Naive thymus-derived CD4-positive, alpha-beta T cell (primary cell): ENCODE measurements at regions of chr17 and their contacts with region 1.

Region 1: DNA sequence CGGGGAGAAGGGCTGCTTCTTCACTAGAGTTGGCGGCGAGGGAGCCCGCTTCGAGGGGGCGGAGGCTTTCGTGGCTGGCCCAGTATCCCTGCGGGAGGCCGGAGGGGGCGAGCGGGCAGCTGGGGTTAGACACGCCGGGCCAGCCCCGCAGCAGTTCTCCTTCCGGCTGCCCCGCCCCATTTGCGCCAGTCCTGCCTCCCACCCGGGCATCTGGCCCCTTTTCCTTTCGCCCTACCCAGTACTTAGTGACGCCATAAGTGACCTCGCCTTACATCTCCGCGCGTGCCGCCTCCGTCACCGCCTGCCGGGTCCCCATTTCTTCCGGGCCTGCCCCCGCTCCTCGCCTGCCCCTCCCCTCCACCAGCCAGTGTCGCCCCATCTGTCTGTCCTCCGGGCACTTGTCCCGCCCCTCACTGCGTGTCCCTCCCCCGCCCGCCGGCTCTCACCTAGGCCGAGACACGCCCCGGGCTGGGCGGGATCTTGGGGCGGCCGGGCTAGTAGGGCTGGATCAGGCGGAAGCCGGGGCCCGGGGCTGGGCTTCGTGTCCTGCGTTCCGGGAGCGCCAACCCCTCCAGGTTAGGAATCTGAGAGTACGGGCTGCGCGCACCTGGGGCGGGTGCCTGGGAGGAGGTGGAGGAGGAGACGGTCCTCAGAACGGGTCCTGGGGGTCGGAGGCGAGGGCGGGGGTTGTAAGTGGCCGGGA is 14.3 kb downstream of the SPATA32 start:
- DNase-seq: peak; percentile 83 to 96 (median 87)
- ATAC-seq: peak; percentile 88
- H3K4me3 ChIP-seq: peak overlapping the region; percentile 89
- H3K4me3 Mint-ChIP-seq: peak overlapping the region; percentile 88 to 93 (median 90)
- H3K27ac ChIP-seq: peak overlapping the region; percentile 95
- H3K27ac Mint-ChIP-seq: peak overlapping the region; percentile 89 to 98 (median 96)
- H3K4me1 ChIP-seq: peaks cover 26 to 42% of the 10 kb centered on the region in 2 donors
- H3K4me1 Mint-ChIP-seq: peaks cover 30 to 68% (median 61%) of the 10 kb centered on the region in 7 donors
- H3K27me3 ChIP-seq: no peaks in the 10 kb centered on the region
- H3K27me3 Mint-ChIP-seq: no peaks in the 10 kb centered on the region

Region 2: DNA sequence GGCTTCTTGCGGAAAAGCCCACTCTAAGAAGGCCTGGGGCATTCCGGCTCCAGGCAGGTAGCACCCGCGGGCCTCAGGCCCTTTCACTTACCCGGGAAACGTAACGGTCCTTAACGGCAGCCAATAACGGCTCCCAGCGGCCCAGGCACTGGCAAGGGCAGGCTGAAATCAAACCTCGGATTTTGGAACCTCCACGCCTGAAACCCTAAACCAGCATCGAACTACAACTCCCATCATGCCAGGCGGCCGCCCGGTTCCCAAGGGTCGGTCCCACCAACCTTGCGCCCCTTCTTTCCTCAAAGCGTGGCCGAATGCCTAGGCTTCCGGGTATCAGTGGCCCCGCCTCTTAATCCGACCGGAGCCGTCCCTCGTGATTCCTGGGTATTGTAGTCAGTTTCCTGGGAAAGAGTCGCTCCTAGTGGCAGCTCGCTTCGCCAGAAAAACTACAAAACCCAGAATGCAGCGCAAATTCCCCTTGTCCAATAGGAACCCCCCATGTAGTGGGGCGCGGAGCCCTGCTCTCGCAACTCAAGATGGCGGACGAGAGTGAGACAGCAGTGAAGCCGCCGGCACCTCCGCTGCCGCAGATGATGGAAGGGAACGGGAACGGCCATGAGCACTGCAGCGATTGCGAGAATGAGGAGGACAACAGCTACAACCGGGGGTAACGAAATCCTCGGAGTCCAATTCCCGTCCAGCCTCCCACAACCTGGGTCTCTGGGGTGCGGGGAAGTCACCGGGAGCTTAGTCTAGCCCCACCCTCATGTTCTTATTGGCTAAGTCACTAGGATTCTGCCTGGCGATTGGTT is 186.6 kb before region 1 on chr17 and contains the start of gene NMT1:
- CTCF ChIA-PET with region 1: no interaction called
- POLR2A ChIA-PET with region 1: no interaction called
- intact Hi-C with region 1: loop called in 1 of 2 experiments (anchors 1 kb)
- DNase-seq: peak; percentile 81 to 98 (median 98)
- ATAC-seq: peak; percentile 95
- H3K4me3 ChIP-seq: peak within 1 kb of the TSS; percentile 97
- H3K4me3 Mint-ChIP-seq: peak within 1 kb of the TSS; percentile 80 to 100 (median 98)
- H3K27ac ChIP-seq: peak within 1 kb of the TSS; percentile 87
- H3K27ac Mint-ChIP-seq: peak within 1 kb of the TSS; percentile 88 to 99 (median 97)
- H3K4me1 ChIP-seq: peaks cover 18 to 20% of the 10 kb centered on the region in 2 donors
- H3K4me1 Mint-ChIP-seq: peaks cover 26 to 66% (median 53%) of the 10 kb centered on the region in 7 donors
- H3K27me3 ChIP-seq: no peaks in the 10 kb centered on the region
- H3K27me3 Mint-ChIP-seq: no peaks in the 10 kb centered on the region
- total RNA-seq, gene NMT1: 59.5 to 136 (median 121) TPM

Region 3: DNA sequence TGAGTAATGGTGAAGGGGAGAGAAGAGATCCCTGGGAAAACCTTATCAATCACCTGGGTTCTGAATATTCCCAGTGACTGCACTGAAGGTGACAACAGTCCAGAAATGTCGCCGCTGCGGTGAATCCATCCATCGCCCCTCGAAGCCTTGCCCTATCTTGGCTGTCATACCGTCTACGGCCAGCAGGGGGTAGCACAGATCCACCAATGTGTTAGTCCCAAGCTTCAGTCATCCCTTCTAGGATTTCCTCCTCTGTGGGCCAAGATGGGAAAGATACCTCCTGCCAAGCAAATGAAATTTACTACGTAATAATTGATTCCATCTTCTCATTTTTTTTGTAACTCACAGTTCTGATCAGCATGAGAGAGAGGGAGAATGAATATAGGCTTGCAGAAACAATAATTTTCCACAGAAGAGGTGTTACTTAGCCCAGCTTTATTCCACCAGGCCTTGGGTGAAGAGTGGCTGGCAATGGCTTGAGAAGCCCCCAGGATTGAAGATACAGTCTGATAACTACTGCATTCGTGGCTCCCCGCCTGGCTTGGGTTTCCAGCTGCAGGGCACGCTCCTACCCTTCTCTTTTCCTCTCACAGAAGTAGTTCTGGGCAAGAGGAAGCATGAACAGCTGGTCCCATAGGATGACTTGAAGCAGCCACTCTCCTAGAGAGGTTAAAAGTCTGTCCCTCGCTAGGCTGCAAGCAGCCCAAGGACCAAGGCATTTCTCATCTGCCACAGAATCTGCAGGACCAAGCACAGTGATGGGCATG is 28.5 kb before region 1 on chr17:
- CTCF ChIA-PET with region 1: interaction called, 35 read pairs
- POLR2A ChIA-PET with region 1: interaction called, 851 read pairs
- intact Hi-C with region 1: no loop called
- DNase-seq: peak; percentile 74 to 89 (median 81)
- ATAC-seq: peak; percentile 74
- H3K4me3 ChIP-seq: peak overlapping the region; percentile 72
- H3K4me3 Mint-ChIP-seq: peak overlapping the region; percentile 81 to 99 (median 90)
- H3K27ac ChIP-seq: peak overlapping the region; percentile 96
- H3K27ac Mint-ChIP-seq: peak overlapping the region; percentile 37 to 94 (median 87)
- H3K4me1 ChIP-seq: peaks cover 24 to 30% of the 10 kb centered on the region in 2 donors
- H3K4me1 Mint-ChIP-seq: peaks cover 29 to 52% (median 37%) of the 10 kb centered on the region in 7 donors
- H3K27me3 ChIP-seq: no peaks in the 10 kb centered on the region
- H3K27me3 Mint-ChIP-seq: no peaks in the 10 kb centered on the region

Region 4: GRCh38 chr17:45235416-45236281 is 11.9 kb before region 1 on chr17:
- CTCF ChIA-PET with region 1: interaction called, 33 read pairs
- POLR2A ChIA-PET with region 1: interaction called, 851 read pairs
- intact Hi-C with region 1: loop called (anchors 1 kb)
- DNase-seq: peak; percentile 59 to 83 (median 71)
- ATAC-seq: peak; percentile 78
- H3K4me3 ChIP-seq: no peak overlapping the region
- H3K4me3 Mint-ChIP-seq: peak overlapping the region in 3 of 10 donors; percentile 30 to 39 (median 38)
- H3K27ac ChIP-seq: peak overlapping the region; percentile 64
- H3K27ac Mint-ChIP-seq: peak overlapping the region; percentile 67 to 100 (median 93)
- H3K4me1 ChIP-seq: peaks cover 30 to 38% of the 10 kb centered on the region in 2 donors
- H3K4me1 Mint-ChIP-seq: peaks cover 38 to 75% (median 62%) of the 10 kb centered on the region in 7 donors
- H3K27me3 ChIP-seq: no peaks in the 10 kb centered on the region
- H3K27me3 Mint-ChIP-seq: no peaks in the 10 kb centered on the region

Region 5: GRCh38 chr17:45270828-45271418 is 23.3 kb after region 1 on chr17:
- CTCF ChIA-PET with region 1: interaction called, 4 read pairs
- POLR2A ChIA-PET with region 1: interaction called, 14 read pairs
- intact Hi-C with region 1: loop called in 1 of 2 experiments (anchors 1 kb)
- DNase-seq: peak; percentile 38 to 71 (median 55)
- ATAC-seq: peak; percentile 85
- H3K4me3 ChIP-seq: no peak overlapping the region
- H3K4me3 Mint-ChIP-seq: no peak overlapping the region
- H3K27ac ChIP-seq: no peak overlapping the region
- H3K27ac Mint-ChIP-seq: peak overlapping the region in 3 of 9 donors; percentile 6 to 32 (median 31)
- H3K4me1 ChIP-seq: no peaks in the 10 kb centered on the region
- H3K4me1 Mint-ChIP-seq: peaks cover 0 to 12% (median 0%) of the 10 kb centered on the region in 7 donors
- H3K27me3 ChIP-seq: no peaks in the 10 kb centered on the region
- H3K27me3 Mint-ChIP-seq: no peaks in the 10 kb centered on the region

Region 6: DNA sequence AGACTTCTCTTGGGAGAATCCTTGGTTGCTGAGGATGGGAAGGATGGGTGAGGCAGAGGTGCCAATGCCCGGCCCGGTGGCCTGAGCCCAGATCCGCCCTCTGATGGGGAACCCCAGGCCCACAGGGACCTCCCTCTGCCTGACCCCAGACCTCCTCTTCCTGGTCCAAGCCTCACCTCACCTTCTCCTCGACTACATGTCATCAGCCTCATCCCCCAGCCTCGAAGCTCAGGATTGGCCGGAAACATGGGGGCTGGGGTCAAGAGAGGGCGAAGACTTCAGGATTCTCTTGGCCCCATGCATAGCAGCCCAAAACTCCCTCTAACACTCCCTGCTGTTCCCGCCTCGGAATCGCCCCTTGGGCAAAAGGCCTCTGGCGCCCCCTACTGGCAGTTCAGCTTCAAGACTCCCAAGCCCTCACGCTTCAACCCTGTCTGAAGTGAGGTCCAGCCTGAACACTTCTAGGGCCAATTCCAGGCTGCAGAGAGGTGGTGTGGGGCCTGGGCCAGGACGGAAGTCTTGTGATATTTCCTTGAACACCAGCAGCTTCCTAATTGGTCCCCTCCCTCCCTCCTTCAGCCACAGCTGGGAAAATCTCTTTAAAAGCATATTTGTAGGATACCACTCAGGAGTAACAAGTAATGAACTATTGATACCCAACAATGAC is 137.9 kb after region 1 on chr17:
- CTCF ChIA-PET with region 1: interaction called, 4 read pairs
- POLR2A ChIA-PET with region 1: interaction called, 4 read pairs
- intact Hi-C with region 1: loop called in 1 of 2 experiments (anchors 1 kb)
- DNase-seq: peak; percentile 70 to 92 (median 85)
- ATAC-seq: peak; percentile 96
- H3K4me3 ChIP-seq: no peak overlapping the region
- H3K4me3 Mint-ChIP-seq: peak overlapping the region in 1 of 10 donors; percentile 37
- H3K27ac ChIP-seq: no peak overlapping the region
- H3K27ac Mint-ChIP-seq: peak overlapping the region in 3 of 9 donors; percentile 2 to 91 (median 58)
- H3K4me1 ChIP-seq: peaks cover 0 to 10% of the 10 kb centered on the region in 2 donors
- H3K4me1 Mint-ChIP-seq: peaks cover 11 to 23% (median 15%) of the 10 kb centered on the region in 7 donors
- H3K27me3 ChIP-seq: no peaks in the 10 kb centered on the region
- H3K27me3 Mint-ChIP-seq: peaks cover 0 to 14% (median 5%) of the 10 kb centered on the region in 5 donors

Region 7: DNA sequence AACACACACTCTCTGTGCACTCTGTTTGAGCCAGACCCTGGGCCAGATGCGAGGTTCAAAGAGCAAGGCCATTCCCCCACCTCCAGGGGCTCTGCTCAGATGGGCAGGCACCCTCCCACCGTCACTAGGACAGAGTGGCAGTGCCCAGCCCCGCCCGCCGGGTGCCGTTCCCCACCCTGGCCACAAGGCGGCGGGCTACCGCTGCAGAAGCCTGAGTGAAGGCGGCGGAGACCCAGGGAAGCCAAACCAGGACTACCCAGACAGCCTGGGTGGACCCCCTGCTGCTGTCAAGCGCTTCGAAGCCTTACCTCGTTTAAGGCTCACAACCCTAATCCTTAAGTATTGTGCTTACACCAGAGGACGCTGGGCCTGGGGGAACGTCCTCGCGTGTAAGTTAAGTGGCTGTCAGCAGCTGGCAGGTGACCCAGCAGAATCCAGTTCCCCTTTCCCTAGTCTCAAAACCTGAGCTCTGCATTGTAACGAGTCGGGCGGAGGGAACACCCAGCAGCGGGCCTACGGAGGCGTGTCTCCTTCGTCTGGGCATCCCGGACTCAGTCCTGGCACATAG is 180.6 kb after region 1 on chr17:
- CTCF ChIA-PET with region 1: no interaction called
- POLR2A ChIA-PET with region 1: no interaction called
- intact Hi-C with region 1: no loop called
- DNase-seq: peak; percentile 62 to 93 (median 81)
- ATAC-seq: peak; percentile 87
- H3K4me3 ChIP-seq: peak overlapping the region; percentile 17
- H3K4me3 Mint-ChIP-seq: peak overlapping the region; percentile 70 to 81 (median 78)
- H3K27ac ChIP-seq: no peak overlapping the region
- H3K27ac Mint-ChIP-seq: peak overlapping the region in 5 of 9 donors; percentile 3 to 82 (median 15)
- H3K4me1 ChIP-seq: peaks cover 11 to 14% of the 10 kb centered on the region in 2 donors
- H3K4me1 Mint-ChIP-seq: peaks cover 14 to 27% (median 25%) of the 10 kb centered on the region in 7 donors
- H3K27me3 ChIP-seq: no peaks in the 10 kb centered on the region
- H3K27me3 Mint-ChIP-seq: no peaks in the 10 kb centered on the region